Psoas muscle (tissue), 8 donors: ENCODE measurements at regions of chr10 and their contacts with region 1.

Region 1: DNA sequence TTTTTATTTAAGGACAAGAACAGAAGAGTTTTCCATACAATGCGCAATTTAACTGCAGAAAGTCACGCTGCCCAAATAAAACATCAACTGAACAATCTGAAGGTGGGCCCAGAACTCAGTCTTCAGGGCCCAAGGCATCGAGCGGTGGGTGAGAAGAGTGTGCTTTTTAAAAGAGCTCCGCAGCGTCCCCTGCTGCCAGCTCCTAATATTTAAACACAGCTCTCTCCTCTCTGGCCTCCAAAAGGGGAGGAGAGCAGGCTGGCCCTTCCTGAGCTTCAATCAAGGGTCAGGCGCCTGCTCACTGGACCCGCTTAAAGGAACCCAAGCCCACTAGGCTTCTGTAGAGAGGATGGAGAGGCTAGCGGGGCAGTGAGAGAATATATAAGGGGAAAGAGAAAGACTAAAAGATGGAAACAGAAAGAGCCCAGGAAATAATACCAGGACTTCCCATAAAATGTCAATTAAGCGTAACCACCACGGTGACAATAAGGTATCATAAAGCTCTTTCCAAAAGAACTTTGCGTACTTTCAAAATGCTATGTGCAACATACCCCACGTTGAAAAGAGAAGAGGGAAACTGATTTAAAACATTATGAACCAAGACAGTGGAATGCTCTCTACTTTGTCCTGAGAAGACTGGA is 2.8 kb downstream of the FAM53B start:
- DNase-seq: peak; percentile 84 to 91
- ATAC-seq: peak; percentile 64 to 72 (median 68)
- H3K4me3 ChIP-seq: peak overlapping the region; percentile 84
- H3K27ac ChIP-seq: peak overlapping the region; percentile 95
- H3K4me1 ChIP-seq: peaks cover 75% of the 10 kb centered on the region
- H3K27me3 ChIP-seq: no peaks in the 10 kb centered on the region
- CTCF ChIP-seq: peak; percentile 93

Region 2: DNA sequence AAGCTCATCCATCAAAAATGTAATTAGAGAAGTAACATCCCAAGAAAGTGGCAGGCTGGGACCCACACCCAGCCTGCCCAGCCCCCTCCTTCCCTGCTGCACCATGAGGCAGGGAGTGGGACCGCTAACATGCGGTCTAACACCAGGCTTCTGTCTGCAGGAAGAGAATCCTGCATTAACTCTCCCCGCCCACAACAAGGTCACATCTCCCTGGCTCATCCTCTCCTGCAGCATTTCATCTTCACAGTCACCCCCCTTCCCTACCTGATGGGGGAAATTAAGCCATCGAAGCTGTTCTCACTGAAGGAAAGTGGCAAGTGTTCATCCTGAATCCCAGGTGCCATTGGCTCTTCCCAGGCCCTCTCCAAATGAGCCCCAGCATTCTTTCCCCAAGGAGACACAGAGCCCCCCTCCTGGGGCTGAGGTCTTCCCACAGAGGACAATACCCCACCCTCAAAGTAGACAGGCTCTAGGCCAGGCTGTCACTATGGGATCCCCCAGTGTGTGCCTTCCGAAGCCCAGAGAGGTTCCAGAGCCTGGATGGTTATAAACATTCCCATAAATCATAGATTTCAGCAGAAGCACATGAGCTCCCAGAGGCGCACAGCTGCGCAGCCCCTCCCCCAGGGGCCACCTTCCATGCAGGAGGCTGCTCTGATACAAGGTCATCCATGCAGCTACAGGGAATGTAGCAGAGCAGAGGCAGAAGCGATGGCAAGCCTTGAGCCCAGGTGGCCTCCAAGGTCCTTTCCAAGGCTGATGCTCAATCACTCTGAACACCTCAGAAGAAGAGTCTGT is 470.7 kb before region 1 on chr10:
- intact Hi-C with region 1: no loop called
- DNase-seq: peak in 1 of 2 donors; percentile 6
- ATAC-seq: no peak
- H3K4me3 ChIP-seq: no peak overlapping the region
- H3K27ac ChIP-seq: no peak overlapping the region
- H3K4me1 ChIP-seq: no peaks in the 10 kb centered on the region
- H3K27me3 ChIP-seq: no peaks in the 10 kb centered on the region
- CTCF ChIP-seq: no peak

Region 3: DNA sequence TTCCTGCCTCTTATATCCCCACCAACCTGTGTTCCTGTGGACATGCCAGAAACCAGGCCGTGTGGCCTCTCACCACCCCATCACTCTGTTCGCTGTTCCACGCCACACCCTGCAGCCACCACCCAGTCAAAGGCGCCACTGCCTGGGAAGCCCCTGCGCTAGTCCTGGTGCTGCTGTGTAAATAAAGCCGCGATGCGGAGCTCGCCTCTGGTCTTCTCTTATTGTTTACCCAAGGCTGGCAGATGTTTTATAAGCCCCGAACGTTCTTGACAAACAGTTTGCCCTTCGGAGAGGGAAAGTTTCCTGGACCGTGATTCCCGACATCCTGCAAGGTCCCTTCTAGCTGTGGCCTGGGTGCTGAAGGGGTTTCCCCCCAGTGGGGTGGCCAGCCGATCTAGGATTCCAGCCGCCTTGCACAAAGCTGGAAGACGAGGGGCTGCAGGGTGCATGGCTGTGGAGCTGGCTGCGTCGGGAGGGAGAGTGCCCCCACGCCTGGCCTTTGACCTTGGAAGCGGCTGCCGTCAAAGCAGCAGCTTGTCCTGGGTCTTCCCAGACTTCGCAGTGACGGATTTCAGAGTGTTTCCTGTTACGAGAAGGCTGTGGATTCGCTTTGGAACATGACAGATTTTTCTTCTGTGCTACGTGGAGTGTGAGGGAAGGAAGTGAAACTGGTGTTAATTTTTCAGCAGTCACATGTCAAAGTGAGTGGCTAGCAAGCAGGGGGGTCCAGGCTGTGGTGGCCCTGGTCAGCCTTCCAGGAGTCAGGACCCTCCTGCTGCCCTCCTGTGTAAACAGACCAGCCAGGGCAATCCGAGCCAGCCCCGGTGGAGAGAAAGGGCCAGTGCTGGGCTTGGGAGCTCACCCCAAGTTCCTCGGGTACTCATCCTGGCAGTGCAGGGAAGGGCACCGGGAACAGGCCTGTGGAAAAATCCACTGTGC is 218.2 kb before region 1 on chr10:
- intact Hi-C with region 1: loop called in 1 of 2 experiments (anchors 5 kb)
- DNase-seq: peak in 1 of 2 donors; percentile 57
- ATAC-seq: no peak
- H3K4me3 ChIP-seq: peak overlapping the region; percentile 7
- H3K27ac ChIP-seq: peak overlapping the region; percentile 9
- H3K4me1 ChIP-seq: peaks cover 34% of the 10 kb centered on the region
- H3K27me3 ChIP-seq: no peaks in the 10 kb centered on the region
- CTCF ChIP-seq: no peak

Region 4: DNA sequence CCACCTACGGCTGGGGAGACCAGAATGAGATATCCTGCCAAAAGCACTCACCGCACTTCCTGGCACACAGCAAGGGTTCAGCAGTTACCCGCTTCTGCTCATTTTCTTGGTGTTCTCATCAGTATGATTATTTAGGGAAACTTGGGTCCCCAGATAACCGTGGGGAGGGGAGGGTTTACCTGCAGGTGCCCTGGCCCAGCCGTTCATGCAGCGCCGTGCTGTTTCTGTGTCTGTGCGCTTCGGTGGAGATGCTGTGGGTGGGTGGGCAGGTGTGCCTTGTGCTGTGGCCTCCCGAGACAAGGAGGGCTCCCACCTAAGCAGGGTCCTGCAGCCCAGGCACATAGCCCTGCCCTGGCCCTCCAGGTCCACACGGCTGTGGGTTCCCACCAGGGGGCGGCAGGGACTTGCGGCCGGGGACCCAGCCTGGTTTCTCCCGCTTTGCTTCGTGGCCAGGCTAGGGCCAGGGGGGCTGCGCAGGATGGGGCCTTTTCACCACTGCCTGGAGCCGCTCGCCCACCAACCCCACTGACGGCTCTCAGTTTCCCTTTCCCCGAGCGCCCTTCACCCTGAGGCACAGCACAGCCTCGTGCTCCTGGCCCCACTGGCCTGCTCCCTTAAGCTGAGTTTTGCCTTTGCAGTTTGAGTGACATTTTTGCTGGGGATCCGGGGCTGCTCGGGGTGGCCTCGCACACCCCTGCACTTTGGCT is 201.3 kb before region 1 on chr10:
- intact Hi-C with region 1: loop called (anchors 2 to 5 kb)
- DNase-seq: peak; percentile 75 to 88
- ATAC-seq: peak; percentile 89 to 96 (median 91)
- H3K4me3 ChIP-seq: no peak overlapping the region
- H3K27ac ChIP-seq: no peak overlapping the region
- H3K4me1 ChIP-seq: peaks cover 4% of the 10 kb centered on the region
- H3K27me3 ChIP-seq: no peaks in the 10 kb centered on the region
- CTCF ChIP-seq: peak; percentile 84

Region 5: DNA sequence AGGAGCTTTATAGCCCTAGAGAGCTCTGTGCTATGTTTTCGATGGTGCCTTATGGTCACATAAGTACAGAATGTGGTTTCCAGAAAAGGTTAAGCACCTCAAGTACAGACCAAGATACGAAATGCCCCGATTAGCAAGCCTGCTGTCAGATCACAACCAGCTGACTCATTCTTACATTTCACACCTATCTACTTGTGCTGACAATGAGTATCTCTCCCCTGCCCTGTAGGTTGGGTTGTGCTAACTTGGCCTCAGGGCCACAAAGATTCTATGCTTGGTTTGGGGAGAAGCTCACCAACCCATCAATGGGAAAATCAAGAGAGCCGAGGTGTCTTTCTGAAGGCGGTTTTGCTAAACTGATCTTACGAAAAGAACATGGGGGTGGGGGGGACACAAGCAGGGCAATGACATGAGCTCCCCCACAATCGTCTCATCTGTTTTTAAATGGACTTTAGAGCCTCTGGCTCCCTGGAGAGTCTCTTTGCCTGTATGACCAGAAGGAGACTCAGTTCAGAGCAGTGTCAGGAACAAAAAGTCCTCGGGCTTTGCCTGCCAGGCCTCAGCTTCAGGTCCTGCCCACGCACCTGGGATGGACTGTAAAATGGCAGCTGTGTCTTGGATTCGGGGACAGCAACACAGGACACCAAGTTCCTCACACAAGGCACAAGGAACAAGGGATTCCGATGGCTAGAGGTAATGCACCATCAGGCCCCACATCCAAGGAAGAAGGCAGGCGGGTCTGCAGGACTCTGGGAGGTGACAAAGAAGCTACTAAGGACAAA is 52.3 kb before region 1 on chr10:
- intact Hi-C with region 1: loop called (anchors 5 to 10 kb)
- DNase-seq: peak in 1 of 2 donors; percentile 77
- ATAC-seq: peak in 3 of 4 donors; percentile 49 to 70 (median 55)
- H3K4me3 ChIP-seq: no peak overlapping the region
- H3K27ac ChIP-seq: peak overlapping the region; percentile 70
- H3K4me1 ChIP-seq: peaks cover 79% of the 10 kb centered on the region
- H3K27me3 ChIP-seq: no peaks in the 10 kb centered on the region
- CTCF ChIP-seq: no peak

Region 6: DNA sequence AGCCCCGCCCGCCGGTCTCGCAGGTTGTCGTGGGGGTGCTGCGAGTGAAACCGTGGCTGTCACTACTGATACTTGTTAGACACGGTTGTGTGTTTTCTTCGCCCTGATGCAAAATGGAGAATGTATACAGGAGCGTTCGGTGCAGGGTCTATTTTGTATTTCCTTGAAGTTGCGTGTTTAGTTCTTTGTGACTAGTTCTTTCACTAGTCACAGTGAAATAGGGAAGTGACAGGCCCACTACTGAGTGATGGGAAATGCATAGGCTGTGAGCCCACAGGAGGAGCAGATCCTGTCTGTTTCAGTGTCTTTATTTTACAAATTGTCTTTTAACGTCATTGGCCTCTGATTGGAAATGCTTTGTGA is 60.9 kb after region 1 on chr10:
- intact Hi-C with region 1: loop called in 1 of 2 experiments (anchors 5 kb)
- DNase-seq: no peak
- ATAC-seq: peak in 2 of 4 donors; percentile 2 to 3
- H3K4me3 ChIP-seq: peak overlapping the region; percentile 91
- H3K27ac ChIP-seq: peak overlapping the region; percentile 89
- H3K4me1 ChIP-seq: peaks cover 18% of the 10 kb centered on the region
- H3K27me3 ChIP-seq: no peaks in the 10 kb centered on the region
- CTCF ChIP-seq: no peak

Region 7: GRCh38 chr10:125734823-125735222 is 993.4 kb after region 1 on chr10:
- intact Hi-C with region 1: no loop called
- DNase-seq: no peak
- ATAC-seq: no peak
- H3K4me3 ChIP-seq: no peak overlapping the region
- H3K27ac ChIP-seq: no peak overlapping the region
- H3K4me1 ChIP-seq: peaks cover 9% of the 10 kb centered on the region
- H3K27me3 ChIP-seq: no peaks in the 10 kb centered on the region
- CTCF ChIP-seq: no peak